Posterior vena cava (tissue), 2 donors: ENCODE measurements at regions of chr2 and their contacts with region 1.

Region 1: DNA sequence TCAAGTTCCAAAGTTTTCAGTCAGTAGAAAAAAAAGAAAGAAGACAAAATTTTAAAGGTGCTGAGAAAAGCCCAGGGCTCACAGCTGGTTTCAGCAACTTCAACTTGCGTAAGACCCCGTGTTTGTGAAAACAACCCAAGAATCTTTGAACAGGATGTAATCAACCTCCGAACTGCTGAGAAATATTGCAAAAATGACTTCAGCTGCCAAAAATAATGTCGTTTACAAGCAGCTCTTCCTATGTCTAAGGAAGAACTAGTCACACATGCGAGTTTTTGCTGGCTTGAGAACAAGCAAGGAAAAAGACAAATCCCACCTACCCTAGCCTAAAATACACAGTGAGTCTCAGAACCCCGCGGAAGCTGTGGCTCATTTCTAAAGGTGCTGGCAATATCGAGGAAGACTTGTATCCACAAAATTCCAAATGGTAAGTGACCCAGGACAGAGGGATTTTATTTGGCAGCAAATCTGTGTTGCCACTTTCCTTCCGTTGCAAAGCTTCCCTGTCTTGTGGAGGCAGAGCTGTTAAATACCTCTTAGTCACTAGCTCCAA is 59.8 kb upstream of the SLC8A1 start:
- DNase-seq: no peak

Region 2: DNA sequence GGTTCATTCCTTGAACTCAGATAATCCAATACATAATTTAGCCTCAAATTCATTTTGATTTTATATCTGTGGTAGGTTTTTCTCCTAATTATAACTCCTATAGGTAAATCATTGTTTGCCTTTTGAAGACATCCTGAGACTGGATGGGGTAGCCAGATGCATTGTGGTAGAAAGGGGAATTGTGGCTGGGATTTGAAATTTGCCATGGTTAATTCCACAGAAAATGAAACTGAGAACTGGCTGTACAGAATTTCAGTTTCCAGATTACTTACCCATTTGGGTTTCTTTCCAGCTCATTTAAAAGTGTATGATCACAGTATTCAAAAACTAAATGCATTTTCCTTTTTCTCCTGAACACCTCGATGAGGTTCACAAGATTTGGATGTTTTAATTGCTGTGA is 1286.2 kb before region 1 on chr2:
- intact Hi-C with region 1: no loop called
- DNase-seq: no peak

Region 3: GRCh38 chr2:40451918-40452605 is 59.7 kb before region 1 on chr2 and contains the start of gene SLC8A1:
- intact Hi-C with region 1: loop called in 1 of 2 experiments (anchors 10 kb)
- DNase-seq: peak; percentile 78
- total RNA-seq, gene SLC8A1: 105 to 121 TPM

Region 4: GRCh38 chr2:40483549-40484243 is 28.0 kb before region 1 on chr2:
- intact Hi-C with region 1: loop called in 1 of 2 experiments (anchors 1 kb)
- DNase-seq: no peak

Region 5: GRCh38 chr2:40534528-40534927 is 22.8 kb after region 1 on chr2:
- intact Hi-C with region 1: loop called in 1 of 2 experiments (anchors 1 kb)
- DNase-seq: no peak